ENCODE measurements at regions of chr15 and their contacts with region 1.

Region 1: GRCh38 chr15:82849556-82850512 is 40.4 kb downstream of the WHAMM start:
- DNase-seq: peak; percentile 80
- ATAC-seq: peak; percentile 80
- H3K4me3 Mint-ChIP-seq: no peak overlapping the region
- H3K27ac Mint-ChIP-seq: peak overlapping the region; percentile 60
- H3K4me1 Mint-ChIP-seq: peaks cover 28% of the 10 kb centered on the region
- H3K27me3 Mint-ChIP-seq: peaks cover 3% of the 10 kb centered on the region

Region 2: DNA sequence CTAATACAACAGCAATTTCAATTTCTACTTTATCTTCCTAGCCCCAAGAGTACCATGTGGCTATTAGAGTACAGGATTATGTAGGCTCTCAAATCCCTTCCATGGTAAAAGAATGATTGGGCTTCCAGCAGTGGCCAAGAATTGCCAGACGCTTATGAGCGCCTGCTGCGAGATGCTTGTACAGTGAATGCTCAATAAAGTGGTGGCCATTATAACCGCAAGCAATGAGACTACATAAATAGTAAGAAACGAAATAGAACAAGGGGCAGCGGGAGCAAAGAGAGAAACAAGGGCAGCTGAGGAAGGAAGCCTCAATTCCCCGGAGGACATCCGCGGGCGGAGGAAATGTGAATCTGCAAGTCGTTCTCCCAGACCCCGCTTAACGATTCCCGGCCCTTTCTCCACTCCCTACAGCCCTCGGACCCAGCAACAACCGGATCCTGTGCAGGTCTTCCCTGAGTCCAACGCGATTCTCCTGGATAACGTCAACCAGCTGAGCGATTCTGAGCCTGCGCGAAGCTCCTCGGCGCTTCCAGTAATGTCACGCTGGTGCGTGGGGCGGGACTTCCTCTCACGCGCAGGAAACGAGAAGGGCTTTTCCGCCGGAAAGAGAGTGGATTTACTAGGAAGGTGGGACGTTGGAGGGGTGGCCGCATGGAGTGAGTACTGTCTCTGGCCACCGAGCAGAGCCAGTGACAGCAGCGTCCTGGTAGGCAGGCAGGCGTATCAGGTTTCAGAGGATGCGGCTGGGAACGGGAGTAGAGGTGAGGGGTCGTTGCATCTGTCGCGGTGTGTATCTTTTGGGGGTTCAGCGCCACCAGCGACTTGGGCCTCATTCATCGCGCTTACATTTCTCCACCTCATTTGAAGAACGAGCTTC is 99.6 kb before region 1 on chr15:
- CTCF ChIA-PET with region 1: interaction called, 12 read pairs
- POLR2A ChIA-PET with region 1: no interaction called
- DNase-seq: peak; percentile 90
- ATAC-seq: peak; percentile 97
- H3K4me3 Mint-ChIP-seq: peak overlapping the region; percentile 96
- H3K27ac Mint-ChIP-seq: peak overlapping the region; percentile 96
- H3K4me1 Mint-ChIP-seq: peaks cover 34% of the 10 kb centered on the region
- H3K27me3 Mint-ChIP-seq: no peaks in the 10 kb centered on the region

Region 3: GRCh38 chr15:82832601-82833361 is 17.1 kb before region 1 on chr15:
- CTCF ChIA-PET with region 1: interaction called, 18 read pairs
- POLR2A ChIA-PET with region 1: no interaction called
- DNase-seq: peak; percentile 38
- ATAC-seq: peak; percentile 55
- H3K4me3 Mint-ChIP-seq: peak overlapping the region; percentile 12
- H3K27ac Mint-ChIP-seq: peak overlapping the region; percentile 86
- H3K4me1 Mint-ChIP-seq: peaks cover 27% of the 10 kb centered on the region
- H3K27me3 Mint-ChIP-seq: no peaks in the 10 kb centered on the region

Region 4: GRCh38 chr15:82838096-82838735 is 11.6 kb before region 1 on chr15:
- CTCF ChIA-PET with region 1: interaction called, 18 read pairs
- POLR2A ChIA-PET with region 1: interaction called, 4 read pairs
- DNase-seq: no peak
- ATAC-seq: no peak
- H3K4me3 Mint-ChIP-seq: no peak overlapping the region
- H3K27ac Mint-ChIP-seq: no peak overlapping the region
- H3K4me1 Mint-ChIP-seq: peaks cover 2% of the 10 kb centered on the region
- H3K27me3 Mint-ChIP-seq: no peaks in the 10 kb centered on the region

Region 5: DNA sequence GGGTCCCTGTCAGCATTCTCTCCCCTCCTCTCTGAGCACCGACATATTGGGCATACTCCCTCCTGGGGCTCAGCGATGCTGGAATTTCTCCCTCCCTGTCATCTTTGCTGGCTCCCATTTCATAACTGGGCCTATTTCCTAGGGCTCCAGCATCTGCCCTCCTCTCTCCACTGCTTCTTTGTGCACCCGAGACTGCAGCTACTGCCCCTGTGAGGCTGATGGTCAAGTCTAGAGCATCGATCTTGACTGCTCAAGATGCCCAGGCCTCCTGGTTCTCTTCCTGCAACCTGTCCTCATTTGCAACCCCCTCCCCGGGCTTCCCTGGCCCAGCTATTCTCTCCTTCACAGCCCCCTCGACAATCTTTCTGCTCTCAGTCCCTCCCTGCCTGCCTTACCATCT is 13.1 kb after region 1 on chr15:
- CTCF ChIA-PET with region 1: interaction called, 24 read pairs
- POLR2A ChIA-PET with region 1: no interaction called
- DNase-seq: no peak
- ATAC-seq: no peak
- H3K4me3 Mint-ChIP-seq: no peak overlapping the region
- H3K27ac Mint-ChIP-seq: no peak overlapping the region
- H3K4me1 Mint-ChIP-seq: peaks cover 5% of the 10 kb centered on the region
- H3K27me3 Mint-ChIP-seq: no peaks in the 10 kb centered on the region

Region 6: GRCh38 chr15:82999905-83000671 is 150.3 kb after region 1 on chr15:
- CTCF ChIA-PET with region 1: interaction called, 46 read pairs
- POLR2A ChIA-PET with region 1: no interaction called
- DNase-seq: peak; percentile 63
- ATAC-seq: peak; percentile 93
- H3K4me3 Mint-ChIP-seq: peak overlapping the region; percentile 64
- H3K27ac Mint-ChIP-seq: peak overlapping the region; percentile 77
- H3K4me1 Mint-ChIP-seq: peaks cover 8% of the 10 kb centered on the region
- H3K27me3 Mint-ChIP-seq: no peaks in the 10 kb centered on the region

Measured in activated CD8-positive, alpha-beta T cell treated with anti-CD3 and anti-CD28 coated beads, Interleukin-2, amount 10 ng/mL, durations not matched to agents 7 days and 5 days (primary cell).